Motor neuron (in vitro differentiated cells): ENCODE measurements at regions of chr2 and their contacts with region 1.

Region 1: DNA sequence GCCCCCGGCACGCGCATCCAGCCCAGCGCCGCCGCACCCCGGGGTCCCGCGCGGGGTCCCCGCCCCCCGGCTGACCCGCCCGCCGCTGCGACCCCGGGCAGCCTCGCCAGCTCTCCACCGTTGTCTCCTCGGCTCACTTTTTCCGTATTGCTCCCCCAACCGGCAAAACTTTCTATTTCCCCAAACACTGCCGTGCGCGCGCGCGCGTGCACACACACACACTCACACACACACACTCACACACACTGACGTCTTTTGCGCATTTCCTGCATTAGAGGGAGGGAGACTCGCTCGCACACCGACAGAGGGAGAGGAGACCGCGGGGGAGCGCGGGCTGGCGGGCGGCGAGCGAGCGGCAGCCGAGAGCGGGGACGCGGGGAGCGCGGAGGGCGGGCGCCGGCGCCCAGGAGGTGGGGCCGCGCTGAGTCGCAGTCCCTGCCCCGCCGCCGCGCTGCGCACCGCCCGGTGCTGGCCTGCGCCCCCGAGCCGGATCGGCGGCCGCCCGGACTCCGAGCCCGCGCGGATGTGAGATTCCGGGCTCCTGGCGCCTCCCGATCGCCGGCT is 542 bp upstream of the PRKCE start:
- ATAC-seq: peak; percentile 66 to 85 (median 82)
- H3K4me3 ChIP-seq: peak overlapping the region; percentile 74 to 91 (median 83)
- H3K27ac ChIP-seq: peak overlapping the region; percentile 35 to 74
- H3K4me1 ChIP-seq: peaks cover 16 to 22% of the 10 kb centered on the region in 2 donors

Region 2: GRCh38 chr2:45728458-45728942 is 77.6 kb after region 1 on chr2:
- in situ Hi-C with region 1: no loop called
- ATAC-seq: no peak
- H3K4me3 ChIP-seq: no peak overlapping the region
- H3K27ac ChIP-seq: no peak overlapping the region
- H3K4me1 ChIP-seq: peaks cover 11 to 29% of the 10 kb centered on the region in 2 donors

Region 3: DNA sequence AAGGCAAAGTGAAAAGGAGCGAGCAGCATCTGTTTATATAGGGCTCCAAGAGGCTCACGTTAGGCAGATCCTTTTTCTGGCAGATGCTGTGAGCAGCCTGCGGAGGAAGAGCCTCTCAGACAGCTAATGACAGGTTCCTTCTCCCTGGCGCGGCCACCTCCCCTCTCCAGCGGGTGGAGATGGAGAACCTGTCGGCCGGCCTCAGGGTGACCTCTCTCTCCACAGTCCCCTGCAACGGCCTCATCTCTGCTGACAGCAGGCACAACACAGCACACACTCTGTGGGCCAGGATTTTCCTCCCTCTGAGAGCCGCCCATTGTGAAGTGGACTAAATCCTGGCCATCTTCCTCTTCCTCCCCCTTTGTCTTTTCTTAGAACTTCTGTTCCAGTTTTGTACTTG is 120.3 kb after region 1 on chr2:
- in situ Hi-C with region 1: loop called in 2 of 9 experiments (anchors 25 kb)
- ATAC-seq: peak in 7 of 8 experiments; percentile 9 to 99 (median 98)
- H3K4me3 ChIP-seq: no peak overlapping the region
- H3K27ac ChIP-seq: peak overlapping the region; percentile 82 to 93
- H3K4me1 ChIP-seq: peaks cover 24 to 32% of the 10 kb centered on the region in 2 donors

Region 4: GRCh38 chr2:45806563-45807358 is 155.8 kb after region 1 on chr2:
- in situ Hi-C with region 1: no loop called
- ATAC-seq: peak in 1 of 8 experiments; percentile 32
- H3K4me3 ChIP-seq: no peak overlapping the region
- H3K27ac ChIP-seq: no peak overlapping the region
- H3K4me1 ChIP-seq: peaks cover 20 to 26% of the 10 kb centered on the region in 2 donors

Region 5: DNA sequence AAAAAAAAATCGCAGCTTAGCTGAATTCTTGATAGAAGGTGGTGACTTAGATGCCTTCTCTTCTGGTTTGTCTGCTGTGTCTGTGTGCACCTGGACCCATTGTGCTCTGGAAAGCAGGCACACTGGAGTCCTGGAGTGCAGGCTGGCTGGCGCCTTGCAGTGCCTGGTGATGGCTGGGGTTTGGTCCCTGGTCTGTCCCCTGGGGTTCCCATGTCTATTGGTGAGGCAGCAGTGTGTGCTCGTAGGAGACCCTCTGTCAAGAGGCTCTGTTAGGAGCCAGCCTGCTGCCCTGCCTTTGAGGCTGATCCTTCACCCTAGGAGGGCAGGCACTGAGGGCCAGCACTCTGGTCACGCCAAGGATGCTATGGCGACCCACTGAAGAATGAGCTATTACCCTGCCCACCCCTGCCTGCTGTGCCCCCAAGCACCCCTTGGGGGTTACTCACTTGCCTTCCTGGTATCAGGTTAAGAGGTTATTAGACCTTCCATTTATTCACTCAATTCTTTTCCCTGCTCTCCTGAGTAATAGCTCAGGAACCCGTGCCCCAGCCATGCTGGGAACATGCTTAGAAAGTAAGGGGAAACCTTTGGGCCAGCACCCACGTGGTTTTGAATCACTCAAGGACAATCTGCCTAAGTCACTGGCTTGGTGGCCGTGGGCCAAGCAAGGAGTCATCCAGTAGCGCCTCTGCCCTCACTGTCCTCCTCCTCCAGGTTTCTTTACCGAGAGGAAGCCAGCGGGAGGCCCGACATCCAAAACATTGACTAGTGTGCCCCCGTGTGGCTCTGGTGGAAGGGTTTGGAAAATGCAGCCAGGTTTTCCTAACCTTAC is 285.1 kb after region 1 on chr2:
- in situ Hi-C with region 1: loop called in 8 of 9 experiments (anchors 10 to 25 kb)
- ATAC-seq: peak; percentile 71 to 91 (median 86)
- H3K4me3 ChIP-seq: no peak overlapping the region
- H3K27ac ChIP-seq: no peak overlapping the region
- H3K4me1 ChIP-seq: peaks cover 6 to 7% of the 10 kb centered on the region in 2 donors